B cell (primary cell): ENCODE measurements at regions of chr12 and their contacts with region 1.

Region 1: DNA sequence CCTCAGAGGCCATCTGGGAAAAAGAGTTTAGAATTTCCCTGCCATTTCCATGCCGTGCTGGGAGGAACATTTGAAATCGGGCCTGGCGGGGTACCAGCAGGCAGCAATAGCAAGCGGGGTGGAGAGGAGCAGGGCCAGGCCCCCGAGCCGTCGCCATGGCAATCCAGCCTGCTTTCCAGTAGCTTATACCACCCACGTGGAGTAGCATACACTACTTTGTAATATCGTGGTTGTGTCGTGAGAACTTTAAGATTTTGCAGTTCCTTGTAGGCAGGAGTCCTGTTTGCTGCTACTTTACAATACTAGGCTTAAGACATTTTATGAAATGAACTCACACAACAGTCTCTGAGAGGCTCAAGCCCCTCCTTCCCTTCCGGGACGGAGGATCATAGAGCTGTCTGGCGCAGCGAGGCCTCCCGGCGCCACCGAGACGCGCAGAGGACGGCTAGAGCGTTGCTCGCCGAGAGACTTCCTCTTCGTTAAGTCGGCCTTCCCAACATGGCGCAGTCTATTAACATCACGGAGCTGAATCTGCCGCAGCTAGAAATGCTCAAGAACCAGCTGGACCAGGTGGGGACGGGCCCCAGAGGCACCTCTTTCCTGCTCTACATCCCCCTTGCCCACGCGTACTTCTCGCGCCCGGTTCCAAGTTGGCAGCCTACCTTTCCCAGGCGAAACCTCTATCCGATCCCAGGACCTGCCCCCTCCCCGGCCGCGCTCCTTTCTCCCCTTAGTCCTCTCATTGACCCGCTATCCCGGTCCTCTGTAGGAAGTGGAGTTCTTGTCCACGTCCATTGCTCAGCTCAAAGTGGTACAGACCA is at the start of gene PFDN5:
- DNase-seq: peak; percentile 92
- ATAC-seq: peak; percentile 90
- H3K4me3 ChIP-seq: peak within 1 kb of the TSS; percentile 64 to 96 (median 82)
- H3K4me3 Mint-ChIP-seq: peak within 1 kb of the TSS; percentile 100
- H3K27ac ChIP-seq: peak within 1 kb of the TSS; percentile 69 to 86
- H3K27ac Mint-ChIP-seq: peak within 1 kb of the TSS; percentile 99
- H3K4me1 ChIP-seq: peaks cover 26 to 39% of the 10 kb centered on the region in 2 donors
- H3K4me1 Mint-ChIP-seq: peaks cover 50% of the 10 kb centered on the region
- H3K27me3 ChIP-seq: no peaks in the 10 kb centered on the region
- H3K27me3 Mint-ChIP-seq: no peaks in the 10 kb centered on the region
- CTCF ChIP-seq: no peak
- total RNA-seq, gene PFDN5: 627 and 654 TPM in 2 replicates

Region 2: DNA sequence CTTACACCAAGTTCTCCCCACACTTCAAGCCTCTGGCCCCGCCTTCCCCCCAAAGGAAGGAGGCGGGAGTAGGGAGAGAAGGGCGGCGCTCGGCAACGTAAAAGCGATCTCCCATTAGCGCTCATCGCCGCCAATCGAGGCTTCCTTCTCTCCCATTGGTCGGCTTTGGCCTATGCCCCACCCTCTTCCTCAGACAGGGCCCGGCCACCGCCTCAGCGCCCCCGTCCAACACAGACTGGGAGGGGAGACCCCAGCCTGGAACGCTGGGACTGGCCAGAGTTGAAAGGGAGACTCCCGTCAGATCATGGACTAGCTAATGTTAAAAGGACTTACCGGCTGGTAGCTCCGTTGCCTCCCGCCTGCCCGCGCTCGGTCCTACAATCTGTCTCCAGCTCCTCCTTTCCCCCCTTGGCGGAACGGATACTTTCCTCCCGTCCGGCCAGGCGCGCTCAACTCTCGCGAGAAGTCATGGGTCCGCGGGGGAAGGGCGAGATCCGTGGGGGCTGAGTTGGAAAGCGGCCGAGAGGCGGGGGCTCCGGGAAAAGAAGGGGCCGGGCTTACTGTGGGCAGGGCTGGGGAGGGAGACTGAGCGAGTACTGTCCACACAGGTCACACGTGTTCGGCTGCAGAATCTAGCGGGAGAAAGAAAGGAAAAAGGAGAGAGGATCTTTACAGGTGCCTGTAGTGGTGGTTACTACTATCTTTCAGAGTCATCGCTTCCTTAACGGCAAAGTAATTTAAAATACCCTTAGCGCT is 330.8 kb after region 1 on chr12 and contains the start of gene ATF7:
- CTCF ChIA-PET with region 1: no interaction called
- POLR2A ChIA-PET with region 1: no interaction called
- intact Hi-C with region 1: loop called (anchors 5 kb)
- DNase-seq: peak; percentile 99
- ATAC-seq: peak; percentile 93
- H3K4me3 ChIP-seq: peak within 1 kb of the TSS; percentile 60 to 91 (median 74)
- H3K4me3 Mint-ChIP-seq: peak within 1 kb of the TSS; percentile 91
- H3K27ac ChIP-seq: peak within 1 kb of the TSS; percentile 77 to 88
- H3K27ac Mint-ChIP-seq: peak within 1 kb of the TSS; percentile 98
- H3K4me1 ChIP-seq: peaks cover 24 to 29% of the 10 kb centered on the region in 2 donors
- H3K4me1 Mint-ChIP-seq: peaks cover 46% of the 10 kb centered on the region
- H3K27me3 ChIP-seq: no peaks in the 10 kb centered on the region
- H3K27me3 Mint-ChIP-seq: no peaks in the 10 kb centered on the region
- CTCF ChIP-seq: no peak
- total RNA-seq, gene ATF7: 42.2 and 42.9 TPM in 2 replicates